AG04449 (cell line): ENCODE measurements at regions of chr11 and their contacts with region 1.

Region 1: GRCh38 chr11:86938900-86939880 is 16.0 kb downstream of the FZD4 start:
- DNase-seq: no peak
- H3K4me3 ChIP-seq: no peak overlapping the region
- CTCF ChIP-seq: peak; percentile 58

Region 2: GRCh38 chr11:86919557-86920210 is 19.5 kb before region 1 on chr11:
- CTCF ChIA-PET with region 1: interaction called, 44 read pairs
- POLR2A ChIA-PET with region 1: no interaction called
- DNase-seq: no peak
- H3K4me3 ChIP-seq: no peak overlapping the region
- CTCF ChIP-seq: peak; percentile 66

Region 3: DNA sequence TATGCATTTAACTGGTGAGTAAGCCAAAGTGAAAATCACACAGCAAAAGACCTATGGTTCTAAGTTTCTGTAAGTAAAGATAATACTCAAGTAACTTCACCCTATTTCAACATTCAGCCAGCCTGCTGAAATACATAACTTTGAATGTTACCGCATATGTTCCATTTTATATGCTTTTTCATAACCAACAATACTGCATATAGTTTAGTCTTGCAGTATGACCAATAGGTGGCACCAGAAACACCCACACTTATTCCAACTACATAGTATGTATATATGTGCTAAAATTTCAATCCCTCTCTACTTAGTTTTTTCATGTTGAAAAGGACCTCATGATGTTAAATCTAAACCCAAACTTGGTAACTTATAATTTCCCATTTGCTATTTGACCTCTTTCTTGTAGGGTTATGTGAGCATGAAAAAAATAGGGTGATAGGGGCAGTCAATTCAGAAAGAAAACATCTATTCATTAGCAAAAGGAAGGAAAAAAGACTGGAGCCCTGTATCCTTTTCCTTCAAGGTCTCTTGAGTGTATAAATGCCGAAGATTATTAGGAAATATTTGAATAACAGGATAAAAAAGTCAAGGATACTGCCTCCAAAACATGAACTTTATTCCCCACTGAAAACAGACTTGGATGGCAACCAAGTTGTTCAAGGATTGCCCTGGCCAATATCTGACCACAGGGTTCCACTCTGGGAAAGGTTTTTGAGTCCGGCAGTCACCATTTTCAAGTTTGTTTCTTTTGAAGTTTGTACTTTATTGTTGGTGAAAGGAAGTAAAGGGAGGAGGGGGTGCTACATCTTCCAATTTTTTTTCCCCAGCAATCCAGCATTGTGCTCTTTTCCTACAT is 39.8 kb after region 1 on chr11:
- CTCF ChIA-PET with region 1: interaction called, 10 read pairs
- POLR2A ChIA-PET with region 1: no interaction called
- DNase-seq: no peak
- H3K4me3 ChIP-seq: no peak overlapping the region
- CTCF ChIP-seq: peak; percentile 40

Region 4: DNA sequence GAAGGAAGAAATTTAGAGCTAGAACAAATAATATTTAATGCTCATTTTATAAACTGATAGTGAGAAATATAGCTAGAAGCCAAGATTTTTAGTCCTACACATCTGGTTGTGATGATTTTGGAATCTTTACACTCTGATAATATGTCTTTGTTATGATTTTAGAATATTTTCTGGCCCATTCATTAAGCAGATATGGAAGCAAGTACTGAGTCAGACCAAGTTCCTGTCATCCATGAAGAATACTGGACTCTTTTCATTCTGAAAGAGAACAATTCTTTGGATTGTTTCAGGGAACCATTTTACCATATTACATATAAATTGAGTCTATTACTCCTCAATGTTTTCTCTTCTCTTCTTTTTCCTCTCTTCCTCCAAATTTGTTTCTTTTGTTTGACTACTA is 325.9 kb after region 1 on chr11:
- CTCF ChIA-PET with region 1: interaction called, 11 read pairs
- POLR2A ChIA-PET with region 1: no interaction called
- DNase-seq: no peak
- H3K4me3 ChIP-seq: no peak overlapping the region
- CTCF ChIP-seq: no peak

Region 5: GRCh38 chr11:87300640-87301380 is 361.6 kb after region 1 on chr11:
- CTCF ChIA-PET with region 1: interaction called, 17 read pairs
- POLR2A ChIA-PET with region 1: no interaction called
- DNase-seq: no peak
- H3K4me3 ChIP-seq: no peak overlapping the region
- CTCF ChIP-seq: no peak

Region 6: DNA sequence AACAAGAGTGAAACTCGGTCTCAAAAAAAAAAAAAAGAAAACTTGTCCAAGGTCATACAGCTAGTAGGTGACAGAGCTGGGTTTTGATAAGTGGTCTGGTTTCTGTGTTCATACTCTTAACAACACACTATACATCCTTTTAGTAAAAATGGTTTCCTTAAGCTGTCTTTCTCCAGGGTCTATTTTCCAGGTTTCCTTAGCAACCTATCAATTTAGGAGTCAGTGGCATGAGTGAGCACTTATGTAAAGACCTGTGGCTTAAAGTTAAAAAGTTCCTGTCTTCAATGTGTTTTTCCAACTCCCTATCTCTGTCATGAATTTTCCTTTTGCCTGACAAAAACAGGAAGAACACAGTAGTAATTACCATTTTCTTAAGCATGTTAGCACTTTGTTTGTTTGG is 579.1 kb after region 1 on chr11:
- CTCF ChIA-PET with region 1: no interaction called
- POLR2A ChIA-PET with region 1: no interaction called
- DNase-seq: no peak
- H3K4me3 ChIP-seq: no peak overlapping the region
- CTCF ChIP-seq: no peak